ENCODE measurements at regions of chrX and their contacts with region 1.

Region 1: DNA sequence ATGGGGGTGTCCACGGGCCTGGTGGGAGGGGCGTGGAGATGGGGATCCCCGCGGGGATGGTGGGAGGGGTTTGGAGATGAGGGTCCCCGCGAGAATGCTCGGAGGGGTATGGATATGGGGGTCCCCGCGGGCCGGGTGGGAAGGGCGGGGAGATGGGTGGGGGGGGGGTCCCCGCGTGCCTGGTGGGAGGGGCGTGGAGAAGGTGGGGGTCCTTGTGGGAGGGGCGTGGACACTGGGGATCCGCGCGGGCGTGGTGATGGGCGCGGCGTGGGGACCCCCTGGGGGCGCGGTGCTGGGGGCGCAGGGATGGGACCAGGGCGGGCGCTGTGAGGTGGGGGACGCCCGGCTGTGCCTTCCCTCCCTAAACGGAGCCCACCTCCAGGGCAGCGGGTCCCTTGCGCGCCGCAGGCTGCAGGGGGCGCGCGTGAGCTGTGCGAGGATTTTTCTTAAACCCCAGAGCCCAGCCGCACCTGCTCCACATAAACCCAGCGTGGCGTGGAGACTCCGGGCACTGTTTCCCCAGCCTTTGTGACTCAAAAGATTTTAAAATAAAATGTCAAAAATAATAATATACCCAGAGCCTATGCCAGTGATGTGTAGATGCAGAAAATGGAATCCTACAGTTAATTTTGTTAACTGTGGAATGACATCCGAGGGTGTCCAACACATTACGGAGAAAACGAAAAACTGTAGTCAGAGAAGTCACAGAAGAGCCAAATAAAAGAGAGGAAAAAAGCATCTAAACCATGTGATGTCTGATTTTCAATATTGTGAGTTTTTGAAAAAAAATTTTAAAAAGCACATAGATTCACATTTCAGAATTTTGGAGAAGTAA is 1.5 kb upstream of the ASMTL start:
- DNase-seq: no peak
- ATAC-seq: peak; percentile 70
- H3K4me3 ChIP-seq: peak overlapping the region; percentile 32; the same call in 1 of the 2 replicates
- H3K27ac ChIP-seq: peak overlapping the region; percentile 42
- H3K4me1 ChIP-seq: peaks cover 4% of the 10 kb centered on the region
- H3K27me3 ChIP-seq: no peaks in the 10 kb centered on the region
- CTCF ChIP-seq: peak; percentile 92 to 98 (median 98); a peak in 5 of 6 replicates
- EP300 ChIP-seq: no peak
- POLR2A ChIP-seq: no peak
- RAD21 ChIP-seq: peak; percentile 95

Region 2: DNA sequence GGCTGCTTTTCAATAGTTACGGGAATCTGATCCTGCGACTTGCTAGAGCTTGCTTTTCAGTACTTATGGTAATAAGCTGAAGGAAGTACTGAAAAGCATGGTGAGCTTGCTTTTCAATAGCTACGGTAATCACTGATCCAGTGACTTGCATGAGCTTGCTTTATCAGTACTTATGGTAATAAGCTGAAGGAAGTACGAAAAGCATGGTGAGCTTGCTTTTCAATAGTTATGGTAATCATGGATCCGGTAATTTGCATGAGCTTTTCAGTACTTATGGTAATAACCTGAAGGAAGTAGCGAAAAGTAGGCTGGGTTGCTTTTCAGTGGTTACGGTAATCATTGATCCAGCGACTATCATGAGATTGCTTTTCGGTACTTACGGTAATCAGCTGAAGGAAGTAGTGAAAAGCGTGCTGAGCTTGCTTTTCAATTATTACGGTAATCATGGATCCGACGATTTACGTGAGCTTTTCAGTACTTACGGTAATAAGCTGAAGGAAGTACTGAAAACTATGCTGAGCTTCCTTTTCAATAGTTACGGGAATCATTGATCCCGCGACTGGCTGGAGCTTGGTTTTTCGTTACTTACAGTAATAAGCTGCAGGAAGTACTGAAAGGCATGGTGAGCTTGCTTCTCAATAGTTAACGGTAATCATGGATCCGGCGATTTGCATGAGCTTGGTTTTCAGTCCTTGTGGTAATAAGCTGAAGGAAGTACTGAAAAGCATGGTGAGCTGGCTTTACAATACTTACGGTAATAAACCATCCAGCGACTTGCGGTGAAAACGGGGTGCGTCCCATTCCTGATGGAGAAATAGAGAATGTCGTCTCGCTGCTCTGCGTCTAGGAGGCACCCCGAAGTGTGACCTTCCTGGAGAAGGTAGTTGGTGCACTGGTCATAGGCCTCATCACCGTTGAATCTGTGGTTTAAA is 248.2 kb before region 1 on chrX:
- CTCF ChIA-PET with region 1: no interaction called
- POLR2A ChIA-PET with region 1: no interaction called
- RAD21 ChIA-PET with region 1: no interaction called
- SMC1A ChIA-PET with region 1: no interaction called
- in situ Hi-C with region 1: no loop called
- intact Hi-C with region 1: no loop called
- DNase-seq: no peak
- ATAC-seq: peak; percentile 39
- H3K4me3 ChIP-seq: peak overlapping the region; percentile 24; the same call in 1 of the 2 replicates
- H3K27ac ChIP-seq: no peak overlapping the region; the same call in 1 of the 2 replicates
- H3K4me1 ChIP-seq: peaks cover 7% of the 10 kb centered on the region; the same call in 1 of the 2 replicates
- H3K27me3 ChIP-seq: no peaks in the 10 kb centered on the region
- CTCF ChIP-seq: no peak
- EP300 ChIP-seq: 0 out of 4 replicates have a peak, but pooled peaks of 1 of the 2 experiments have one; percentile 15
- POLR2A ChIP-seq: no peak
- RAD21 ChIP-seq: no peak

Region 3: DNA sequence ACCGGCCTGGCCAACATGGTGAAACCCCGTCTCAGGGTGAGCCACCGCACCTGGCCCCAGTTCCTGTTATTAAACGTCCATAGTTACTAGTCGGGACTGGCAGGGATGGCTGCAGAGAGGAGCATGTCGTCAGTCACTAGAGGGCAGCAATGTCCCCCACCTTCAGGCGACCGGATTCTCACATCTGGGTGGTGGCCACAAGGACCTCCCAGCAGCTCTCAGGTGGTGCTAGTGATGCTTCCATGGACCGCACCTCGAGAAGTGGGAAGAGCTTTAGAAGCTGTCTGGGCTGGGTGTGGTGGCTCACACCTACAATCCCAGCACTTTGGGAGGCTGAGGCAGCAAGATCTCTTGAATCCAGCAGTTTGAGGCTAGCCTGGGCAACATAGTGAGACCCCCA is 130.9 kb before region 1 on chrX:
- CTCF ChIA-PET with region 1: no interaction called
- POLR2A ChIA-PET with region 1: no interaction called
- RAD21 ChIA-PET with region 1: no interaction called
- SMC1A ChIA-PET with region 1: no interaction called
- in situ Hi-C with region 1: no loop called
- intact Hi-C with region 1: loop called (anchors 5 kb)
- DNase-seq: peak; percentile 55
- ATAC-seq: peak; percentile 77
- H3K4me3 ChIP-seq: no peak overlapping the region
- H3K27ac ChIP-seq: no peak overlapping the region
- H3K4me1 ChIP-seq: peaks cover 22% of the 10 kb centered on the region
- H3K27me3 ChIP-seq: no peaks in the 10 kb centered on the region
- CTCF ChIP-seq: peak; percentile 55 to 67 (median 60); a peak in 5 of 6 replicates
- EP300 ChIP-seq: no peak
- POLR2A ChIP-seq: no peak
- RAD21 ChIP-seq: peak; percentile 56

Region 4: GRCh38 chrX:1537035-1537715 is 83.0 kb after region 1 on chrX and contains the start of gene P2RY8:
- CTCF ChIA-PET with region 1: no interaction called
- POLR2A ChIA-PET with region 1: no interaction called
- RAD21 ChIA-PET with region 1: no interaction called
- SMC1A ChIA-PET with region 1: no interaction called
- in situ Hi-C with region 1: no loop called
- intact Hi-C with region 1: loop called (anchors 1 kb)
- DNase-seq: peak; percentile 75
- ATAC-seq: peak; percentile 69
- H3K4me3 ChIP-seq: peak within 1 kb of the TSS; percentile 92
- H3K27ac ChIP-seq: peak within 1 kb of the TSS; percentile 97
- H3K4me1 ChIP-seq: peaks cover 4% of the 10 kb centered on the region; the same call in 1 of the 2 replicates
- H3K27me3 ChIP-seq: no peaks in the 10 kb centered on the region
- CTCF ChIP-seq: peak; percentile 16 to 73 (median 48); a peak in 4 of 6 replicates
- EP300 ChIP-seq: no peak
- POLR2A ChIP-seq: peak; percentile 90
- RAD21 ChIP-seq: peak; percentile 79
- polyA plus RNA-seq, gene P2RY8: 2.0 to 4.0 TPM

Region 5: DNA sequence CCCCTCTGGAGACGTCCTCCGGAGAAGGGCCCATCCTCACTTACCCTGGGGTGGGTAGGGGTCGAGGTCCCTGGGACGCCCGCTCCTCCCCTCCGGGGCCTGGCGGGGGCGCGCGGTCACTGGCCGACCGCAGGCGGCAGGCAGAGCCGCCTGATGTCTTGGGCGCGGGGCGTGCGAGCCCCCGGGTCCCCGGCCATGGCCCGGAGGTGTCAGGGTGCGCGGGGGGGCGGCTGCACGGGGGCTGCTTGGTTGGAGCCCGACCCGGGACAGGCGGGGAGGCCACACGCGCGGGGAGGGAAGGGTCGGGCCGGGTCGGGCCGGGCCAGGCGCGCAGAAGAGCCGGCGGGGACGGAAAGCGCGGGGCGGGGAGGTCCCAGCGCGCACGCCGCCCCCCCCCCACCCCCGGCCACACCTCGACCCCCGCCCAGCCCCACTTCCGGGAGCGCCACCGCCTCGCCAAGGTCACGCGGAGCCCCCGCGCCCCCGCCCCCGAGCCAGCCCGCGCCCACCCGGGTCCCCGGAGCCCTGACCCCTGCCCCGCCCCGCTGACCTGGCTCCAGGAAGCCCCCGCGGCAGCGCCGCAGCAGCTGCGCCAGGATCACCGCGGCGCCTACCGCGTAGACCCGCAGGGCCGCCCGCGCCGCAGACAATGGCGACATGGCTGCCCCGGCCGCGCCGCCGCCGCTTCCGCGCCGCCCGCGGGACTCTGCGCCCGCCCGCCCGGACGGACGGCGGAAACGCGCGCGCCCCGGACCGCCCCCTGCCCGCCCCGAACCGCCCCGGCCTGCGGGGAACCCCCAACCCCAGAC is 1046.3 kb after region 1 on chrX and contains the starts of genes DHRSX and ZBED1:
- CTCF ChIA-PET with region 1: no interaction called
- POLR2A ChIA-PET with region 1: no interaction called
- RAD21 ChIA-PET with region 1: no interaction called
- SMC1A ChIA-PET with region 1: no interaction called
- in situ Hi-C with region 1: loop called (anchors 25 kb)
- intact Hi-C with region 1: no loop called
- DNase-seq: no peak
- ATAC-seq: peak; percentile 77
- H3K4me3 ChIP-seq: peak within 1 kb of the TSS; percentile 90
- H3K27ac ChIP-seq: peak within 1 kb of the TSS; percentile 88
- H3K4me1 ChIP-seq: peaks cover 22% of the 10 kb centered on the region
- H3K27me3 ChIP-seq: no peaks in the 10 kb centered on the region
- CTCF ChIP-seq: peak; percentile 7 to 35 (median 13); a peak in 3 of 6 replicates
- EP300 ChIP-seq: no peak
- POLR2A ChIP-seq: peak; percentile 88
- RAD21 ChIP-seq: peak; percentile 40; the same call in 1 of the 2 replicates
- polyA plus RNA-seq, gene DHRSX: 1.7 to 3.3 TPM
- polyA plus RNA-seq, gene ZBED1: 1.9 to 4.8 TPM

Region 6: DNA sequence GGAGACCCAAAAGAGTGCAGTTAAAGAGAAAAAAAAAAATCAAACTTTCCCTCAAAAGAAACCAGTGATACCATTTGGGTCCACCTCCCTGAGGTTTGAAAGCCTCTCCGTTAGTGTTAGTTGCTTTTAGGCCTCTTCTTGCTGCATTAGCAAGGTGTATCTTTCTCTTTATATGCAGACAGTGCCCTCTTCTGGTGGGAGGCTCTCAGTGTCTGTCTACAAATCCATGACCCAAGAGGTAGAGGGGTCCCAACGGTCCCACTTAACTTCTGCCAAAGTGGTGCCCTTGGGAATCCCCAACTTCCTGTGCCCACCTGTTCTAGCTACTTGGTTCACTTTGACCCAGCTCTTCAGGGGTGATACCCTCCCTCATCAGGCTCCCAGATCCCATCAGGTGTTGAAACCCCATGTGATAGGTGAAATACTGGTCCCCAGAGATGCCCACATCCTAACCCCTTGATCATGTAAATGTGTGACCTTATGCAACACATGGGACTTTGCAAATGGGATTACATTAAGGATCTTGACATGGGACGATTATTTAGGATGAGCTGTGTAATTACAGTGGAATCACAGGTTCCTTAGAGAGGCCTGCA is 1173.2 kb after region 1 on chrX:
- CTCF ChIA-PET with region 1: no interaction called
- POLR2A ChIA-PET with region 1: no interaction called
- RAD21 ChIA-PET with region 1: no interaction called
- SMC1A ChIA-PET with region 1: no interaction called
- in situ Hi-C with region 1: no loop called
- intact Hi-C with region 1: loop called (anchors 10 kb)
- DNase-seq: no peak
- ATAC-seq: peak; percentile 99
- H3K4me3 ChIP-seq: no peak overlapping the region
- H3K27ac ChIP-seq: no peak overlapping the region
- H3K4me1 ChIP-seq: no peaks in the 10 kb centered on the region
- H3K27me3 ChIP-seq: no peaks in the 10 kb centered on the region
- CTCF ChIP-seq: peak; percentile 67 to 69 (median 69)
- EP300 ChIP-seq: no peak
- POLR2A ChIP-seq: no peak
- RAD21 ChIP-seq: peak; percentile 83

Measured in GM12878 (cell line).